GM10248 (cell line): ENCODE measurements at regions of chr1 and their contacts with region 1.

Region 1: DNA sequence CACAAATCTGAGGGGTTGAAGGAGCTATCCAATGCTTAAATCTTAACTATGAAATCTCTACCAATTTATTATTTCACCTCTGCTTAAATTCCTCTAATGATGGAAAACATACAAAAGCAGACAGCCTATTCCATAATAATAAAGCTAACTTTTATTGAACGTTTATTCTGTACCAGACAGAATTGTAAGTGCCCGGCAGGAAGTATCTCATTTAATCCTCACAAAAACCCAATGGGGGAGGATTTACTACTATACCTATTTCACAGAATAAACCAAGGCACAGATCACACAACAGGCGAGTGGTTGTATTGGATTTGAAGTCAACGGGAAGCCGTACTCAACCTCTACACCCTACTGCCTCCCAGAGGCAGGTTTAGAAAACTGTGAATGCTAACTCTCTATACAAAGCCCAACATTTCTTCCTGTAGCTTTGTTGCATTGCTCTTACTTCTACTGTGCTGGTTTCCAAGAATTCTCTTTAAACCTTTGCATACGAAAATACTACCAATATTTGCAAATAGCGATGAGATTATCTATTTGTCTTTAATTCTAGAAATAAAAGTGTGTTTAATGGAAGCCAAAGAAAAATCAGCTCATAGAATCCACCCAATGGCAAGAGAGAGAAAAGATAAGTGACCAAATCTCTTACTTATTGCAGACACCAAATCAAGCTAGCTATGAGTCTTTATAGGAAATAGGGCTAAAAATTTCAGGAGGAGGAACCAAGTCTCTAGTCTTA is 33.5 kb upstream of the C1orf53 start:
- DNase-seq: peak; percentile 36
- CTCF ChIP-seq: peak; percentile 58

Region 2: DNA sequence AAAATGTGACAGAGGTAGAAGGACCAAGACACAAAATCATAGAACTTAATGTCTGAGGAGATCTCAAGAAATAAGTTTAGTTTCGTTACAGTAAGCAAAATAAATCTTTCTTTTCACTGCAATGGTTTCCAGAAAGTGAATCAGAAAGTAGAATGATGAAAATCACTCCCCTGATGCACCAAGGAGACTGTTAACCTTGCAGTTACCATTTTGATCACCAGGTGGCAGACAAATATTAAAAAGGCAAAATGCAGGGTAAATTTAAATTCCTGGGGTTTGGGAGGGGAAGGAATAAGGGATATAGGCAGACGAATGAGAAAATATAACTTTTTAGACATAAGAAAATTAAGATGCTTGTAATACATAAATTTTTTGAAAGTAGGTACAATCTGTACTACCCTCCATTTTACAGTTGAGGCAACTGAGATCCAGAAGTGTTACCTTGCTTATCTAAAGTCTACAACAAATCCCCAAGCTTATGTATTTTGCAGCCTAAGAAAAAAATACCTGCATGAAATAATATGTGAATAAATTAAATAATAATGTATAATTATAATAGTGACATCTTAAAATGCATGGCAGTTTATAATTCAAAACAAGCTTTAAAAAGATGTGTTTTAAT is 347.7 kb before region 1 on chr1:
- CTCF ChIA-PET with region 1: interaction called, 16 read pairs
- POLR2A ChIA-PET with region 1: no interaction called
- DNase-seq: peak; percentile 18
- CTCF ChIP-seq: peak; percentile 78

Region 3: GRCh38 chr1:197526736-197527371 is 342.1 kb before region 1 on chr1:
- CTCF ChIA-PET with region 1: interaction called, 16 read pairs
- POLR2A ChIA-PET with region 1: no interaction called
- DNase-seq: peak; percentile 10
- CTCF ChIP-seq: peak; percentile 37

Region 4: DNA sequence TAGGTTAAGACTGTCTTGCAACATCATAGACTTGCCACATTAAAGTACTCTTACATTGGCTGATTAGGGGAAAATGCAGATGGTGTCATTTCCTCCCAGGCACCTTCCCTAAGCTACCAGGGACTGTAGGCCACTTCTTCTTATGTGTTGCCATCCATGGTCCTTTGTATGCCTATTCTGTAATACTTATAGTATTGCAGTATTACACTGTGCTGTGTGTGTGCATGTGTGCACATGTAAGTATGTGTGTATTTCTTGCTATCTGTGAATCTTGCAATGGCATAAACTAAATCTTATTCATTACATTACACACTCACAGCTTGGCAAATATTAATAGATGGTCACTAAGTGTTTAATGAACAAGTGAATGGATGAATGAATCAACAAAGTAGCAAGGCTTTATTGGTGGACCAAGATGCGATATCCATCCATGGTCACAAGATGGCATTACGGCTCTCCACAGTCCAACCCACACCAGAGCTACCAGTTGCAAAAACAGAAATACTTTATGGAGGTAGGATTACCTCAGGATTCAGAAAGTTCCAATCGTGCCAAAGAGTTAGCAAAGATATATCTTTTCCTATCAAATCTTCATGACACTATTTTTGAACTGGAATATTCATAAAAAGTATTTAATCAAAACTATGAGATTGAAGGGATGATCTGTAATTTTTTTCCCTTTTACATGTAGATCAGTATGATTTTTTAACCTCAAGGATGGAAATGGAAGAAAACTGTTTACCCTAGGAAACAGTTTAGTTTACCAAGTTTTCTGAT is 253.8 kb before region 1 on chr1:
- CTCF ChIA-PET with region 1: interaction called, 17 read pairs
- POLR2A ChIA-PET with region 1: no interaction called
- DNase-seq: no peak
- CTCF ChIP-seq: peak; percentile 41

Region 5: DNA sequence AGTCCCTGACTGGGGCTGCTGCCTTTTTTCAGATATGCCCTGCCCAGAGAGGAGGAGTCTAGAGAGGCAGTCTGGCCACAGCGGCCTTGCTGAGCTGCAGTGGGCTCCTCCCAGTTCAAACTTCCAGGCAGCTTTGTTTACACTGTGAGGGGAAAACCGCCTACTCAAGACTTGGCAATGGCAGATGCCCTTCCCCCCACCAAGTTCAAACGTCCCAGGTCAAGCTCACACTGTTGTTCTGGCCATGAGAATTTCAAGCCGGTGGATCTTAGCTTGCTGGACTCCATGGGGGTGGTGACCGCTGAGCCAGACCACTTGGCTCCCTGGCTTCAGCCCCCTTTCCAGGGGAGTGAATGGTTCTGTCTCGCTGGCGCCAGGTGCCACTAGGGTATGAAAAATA is 15.3 kb after region 1 on chr1:
- CTCF ChIA-PET with region 1: interaction called, 10 read pairs
- POLR2A ChIA-PET with region 1: no interaction called
- DNase-seq: no peak
- CTCF ChIP-seq: no peak